MCF 10A (cell line): ENCODE measurements at regions of chr15 and their contacts with region 1.

Region 1: DNA sequence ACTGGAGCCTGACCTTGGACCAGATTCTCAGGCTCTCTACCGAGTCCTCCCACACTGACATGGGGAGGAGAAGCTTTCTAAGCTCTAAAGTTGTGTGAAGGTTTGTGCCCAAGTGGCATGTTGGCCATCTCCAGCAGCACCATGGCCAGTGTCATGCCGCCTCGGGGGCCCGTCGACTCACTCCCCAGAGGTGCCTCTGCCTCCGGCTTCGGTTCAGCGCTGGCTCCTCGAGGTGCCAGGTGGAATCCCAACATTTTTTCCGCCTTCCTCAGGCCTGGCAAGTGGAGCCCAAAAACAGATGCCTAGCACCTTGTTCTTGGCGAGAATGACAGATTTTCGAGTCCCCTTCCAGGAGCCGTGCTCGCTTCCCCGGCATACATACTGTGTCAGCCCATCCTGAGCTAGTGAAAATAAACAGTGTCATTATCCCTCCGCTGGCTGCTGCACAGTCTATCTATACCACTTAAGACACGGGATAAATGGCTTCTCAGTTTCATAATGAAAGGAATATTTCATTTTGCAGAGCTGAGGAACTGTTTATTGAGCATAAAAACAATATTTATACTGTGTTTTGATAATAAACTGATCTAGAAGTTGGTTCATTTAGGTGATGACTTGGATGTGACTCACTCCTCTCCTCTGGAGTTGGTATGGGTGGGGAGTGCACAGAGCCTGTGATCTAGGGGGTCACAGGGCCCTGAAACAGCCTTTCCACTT is 328.5 kb upstream of the TLE3 start:
- DNase-seq: peak; percentile 59
- H3K4me3 Mint-ChIP-seq: no peak overlapping the region
- H3K27ac Mint-ChIP-seq: no peak overlapping the region
- H3K4me1 Mint-ChIP-seq: peaks cover 26% of the 10 kb centered on the region
- H3K27me3 Mint-ChIP-seq: peaks cover 34% of the 10 kb centered on the region
- CTCF ChIP-seq: no peak

Region 2: GRCh38 chr15:70437882-70438331 is 11.6 kb after region 1 on chr15:
- CTCF ChIA-PET with region 1: interaction called, 11 read pairs
- POLR2A ChIA-PET with region 1: interaction called, 6 read pairs
- intact Hi-C with region 1: no loop called
- DNase-seq: peak; percentile 92
- H3K4me3 Mint-ChIP-seq: no peak overlapping the region
- H3K27ac Mint-ChIP-seq: no peak overlapping the region
- H3K4me1 Mint-ChIP-seq: peaks cover 17% of the 10 kb centered on the region
- H3K27me3 Mint-ChIP-seq: peaks cover 45% of the 10 kb centered on the region
- CTCF ChIP-seq: peak; percentile 27